GM12878 (cell line): ENCODE measurements at regions of chr15 and their contacts with region 1.

Region 1: DNA sequence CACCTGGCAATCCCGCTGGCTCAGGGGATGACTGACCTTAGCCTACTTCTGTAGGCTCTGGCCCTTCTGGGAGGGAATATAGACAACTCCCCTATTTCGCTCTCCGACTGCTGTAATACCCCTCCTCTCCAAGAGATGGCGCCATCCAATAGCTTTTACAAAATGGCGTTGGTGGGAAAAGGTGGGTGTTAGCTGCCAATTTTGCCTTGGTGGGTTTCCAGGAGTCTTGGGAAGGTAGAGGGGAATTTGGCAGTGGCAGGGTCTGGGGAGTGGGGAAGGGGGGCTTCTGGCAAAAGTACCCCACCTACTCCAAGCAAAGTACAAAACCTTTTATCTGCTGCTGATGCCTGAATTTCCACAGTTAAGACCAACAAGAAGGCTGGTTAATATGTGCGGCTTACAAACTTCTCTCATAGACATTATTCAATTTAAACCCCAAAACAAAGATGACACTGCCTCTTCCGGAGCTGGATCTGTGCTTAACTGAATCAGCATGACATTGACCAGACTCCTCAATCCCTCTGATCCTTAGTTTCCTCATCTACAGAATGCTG is 62.1 kb downstream of the RASGRF1 start:
- DNase-seq: no peak
- ATAC-seq: peak; percentile 76
- H3K4me3 ChIP-seq: no peak overlapping the region
- H3K27ac ChIP-seq: no peak overlapping the region
- H3K4me1 ChIP-seq: no peaks in the 10 kb centered on the region
- H3K27me3 ChIP-seq: no peaks in the 10 kb centered on the region
- CTCF ChIP-seq: peak; percentile 89 to 97 (median 90)
- EP300 ChIP-seq: no peak
- POLR2A ChIP-seq: no peak
- RAD21 ChIP-seq: peak; percentile 95

Region 2: GRCh38 chr15:78938658-78939488 is 89.6 kb before region 1 on chr15:
- CTCF ChIA-PET with region 1: no interaction called
- POLR2A ChIA-PET with region 1: no interaction called
- RAD21 ChIA-PET with region 1: no interaction called
- SMC1A ChIA-PET with region 1: no interaction called
- in situ Hi-C with region 1: no loop called
- intact Hi-C with region 1: loop called (anchors 5 kb)
- DNase-seq: peak; percentile 91
- ATAC-seq: peak; percentile 73
- H3K4me3 ChIP-seq: peak overlapping the region; percentile 60; the same call in 1 of the 2 replicates
- H3K27ac ChIP-seq: peak overlapping the region; percentile 91
- H3K4me1 ChIP-seq: peaks cover 28% of the 10 kb centered on the region
- H3K27me3 ChIP-seq: no peaks in the 10 kb centered on the region
- CTCF ChIP-seq: no peak
- EP300 ChIP-seq: peak; percentile 70 to 73; a peak in 3 of 4 replicates
- POLR2A ChIP-seq: no peak
- RAD21 ChIP-seq: peak; percentile 17; the same call in 1 of the 2 replicates

Region 3: GRCh38 chr15:79041601-79042168 is 13.2 kb after region 1 on chr15:
- CTCF ChIA-PET with region 1: interaction called, 10 read pairs
- POLR2A ChIA-PET with region 1: no interaction called
- RAD21 ChIA-PET with region 1: no interaction called
- SMC1A ChIA-PET with region 1: no interaction called
- in situ Hi-C with region 1: no loop called
- intact Hi-C with region 1: no loop called
- DNase-seq: no peak
- ATAC-seq: no peak
- H3K4me3 ChIP-seq: no peak overlapping the region
- H3K27ac ChIP-seq: no peak overlapping the region
- H3K4me1 ChIP-seq: no peaks in the 10 kb centered on the region
- H3K27me3 ChIP-seq: peaks cover 0 to under 1% of the 10 kb centered on the region in 2 experiments; a peak in 3 of 4 replicates
- CTCF ChIP-seq: no peak
- EP300 ChIP-seq: no peak
- POLR2A ChIP-seq: no peak
- RAD21 ChIP-seq: no peak

Region 4: DNA sequence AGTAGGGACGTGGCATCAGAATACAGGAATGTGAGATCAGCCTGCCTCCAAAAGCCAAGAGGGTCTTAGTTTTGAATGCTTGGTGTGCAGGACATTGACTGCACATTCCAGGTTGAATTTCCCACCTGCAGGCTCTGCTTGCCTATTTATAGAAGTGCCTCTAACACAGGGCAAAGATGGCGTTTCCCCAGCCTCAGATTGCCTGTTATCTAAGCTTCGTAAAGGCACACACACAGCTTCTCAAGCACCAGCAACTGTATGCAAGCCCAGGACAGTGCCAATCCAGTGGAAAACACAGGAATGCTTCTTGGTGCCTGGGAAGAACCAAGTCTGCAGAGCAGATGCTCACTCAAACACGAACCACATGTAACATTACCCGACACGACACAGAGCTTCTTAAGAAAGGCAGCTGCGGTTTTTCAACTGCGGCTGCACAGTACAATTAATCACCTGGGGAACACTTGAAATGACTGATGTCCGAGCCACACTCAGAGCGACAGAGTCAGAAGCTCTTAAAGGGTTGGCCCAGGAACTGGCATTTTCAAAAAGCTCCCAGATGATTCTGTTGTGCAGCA is 164.1 kb after region 1 on chr15:
- CTCF ChIA-PET with region 1: interaction called, 351 read pairs
- POLR2A ChIA-PET with region 1: no interaction called
- RAD21 ChIA-PET with region 1: interaction called, 6 read pairs
- SMC1A ChIA-PET with region 1: interaction called, 12 read pairs
- in situ Hi-C with region 1: no loop called
- intact Hi-C with region 1: no loop called
- DNase-seq: no peak
- ATAC-seq: no peak
- H3K4me3 ChIP-seq: no peak overlapping the region
- H3K27ac ChIP-seq: no peak overlapping the region
- H3K4me1 ChIP-seq: no peaks in the 10 kb centered on the region
- H3K27me3 ChIP-seq: peaks cover 2 to 8% of the 10 kb centered on the region in 2 experiments; a peak in 3 of 4 replicates
- CTCF ChIP-seq: no peak
- EP300 ChIP-seq: no peak
- POLR2A ChIP-seq: no peak
- RAD21 ChIP-seq: no peak

Region 5: GRCh38 chr15:79364571-79365240 is 336.2 kb after region 1 on chr15:
- CTCF ChIA-PET with region 1: no interaction called
- POLR2A ChIA-PET with region 1: no interaction called
- RAD21 ChIA-PET with region 1: no interaction called
- SMC1A ChIA-PET with region 1: no interaction called
- in situ Hi-C with region 1: no loop called
- intact Hi-C with region 1: no loop called
- DNase-seq: no peak
- ATAC-seq: no peak
- H3K4me3 ChIP-seq: no peak overlapping the region
- H3K27ac ChIP-seq: no peak overlapping the region
- H3K4me1 ChIP-seq: no peaks in the 10 kb centered on the region
- H3K27me3 ChIP-seq: no peaks in the 10 kb centered on the region
- CTCF ChIP-seq: no peak
- EP300 ChIP-seq: no peak
- POLR2A ChIP-seq: no peak
- RAD21 ChIP-seq: no peak